Activated CD4-positive, alpha-beta T cell treated with anti-CD3 and anti-CD28 coated beads, Interleukin-2, amount 10 ng/mL, durations not matched to agents 24 days and 14 days (primary cell): ENCODE measurements at regions of chr7 and their contacts with region 1.

Region 1: GRCh38 chr7:129091484-129092002 is 36.6 kb upstream of the TNPO3 start:
- DNase-seq: peak; percentile 97
- H3K4me3 Mint-ChIP-seq: no peak overlapping the region
- H3K27ac Mint-ChIP-seq: no peak overlapping the region
- H3K4me1 Mint-ChIP-seq: peaks cover 25% of the 10 kb centered on the region
- H3K27me3 Mint-ChIP-seq: peaks cover 2% of the 10 kb centered on the region

Region 2: DNA sequence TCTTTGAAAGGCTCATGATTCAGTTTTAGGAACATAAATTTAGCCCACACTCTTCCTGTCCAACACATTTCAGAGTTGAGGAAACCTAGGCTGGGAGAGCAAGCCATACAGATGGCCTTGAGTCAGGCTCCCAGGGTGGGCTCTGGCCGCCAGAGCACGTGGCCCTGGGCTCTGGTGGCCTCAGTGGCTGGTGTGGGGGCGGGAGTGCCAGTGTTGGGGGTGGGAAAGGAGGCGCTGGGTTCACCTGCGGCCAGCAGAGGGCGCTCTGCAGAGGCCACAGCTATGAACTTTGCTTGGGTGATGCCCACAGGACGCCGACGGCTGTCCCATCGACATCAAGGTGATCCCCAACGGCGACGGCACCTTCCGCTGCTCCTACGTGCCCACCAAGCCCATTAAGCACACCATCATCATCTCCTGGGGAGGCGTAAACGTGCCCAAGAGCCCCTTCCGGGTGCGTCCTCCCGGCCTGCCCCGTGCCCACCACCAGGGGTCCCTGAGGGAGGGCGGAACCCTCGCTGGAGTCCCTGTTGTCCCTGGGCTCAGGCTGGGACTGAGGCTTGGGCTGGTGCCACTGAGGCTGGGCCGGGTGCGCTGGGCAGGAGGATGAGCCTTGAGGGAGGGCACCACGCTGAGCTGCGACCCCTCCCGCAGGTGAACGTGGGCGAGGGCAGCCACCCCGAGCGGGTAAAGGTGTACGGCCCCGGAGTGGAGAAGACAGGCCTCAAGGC is 249.5 kb before region 1 on chr7:
- intact Hi-C with region 1: loop called (anchors 5 kb)
- DNase-seq: peak; percentile 87
- H3K4me3 Mint-ChIP-seq: no peak overlapping the region
- H3K27ac Mint-ChIP-seq: no peak overlapping the region
- H3K4me1 Mint-ChIP-seq: no peaks in the 10 kb centered on the region
- H3K27me3 Mint-ChIP-seq: no peaks in the 10 kb centered on the region

Region 3: DNA sequence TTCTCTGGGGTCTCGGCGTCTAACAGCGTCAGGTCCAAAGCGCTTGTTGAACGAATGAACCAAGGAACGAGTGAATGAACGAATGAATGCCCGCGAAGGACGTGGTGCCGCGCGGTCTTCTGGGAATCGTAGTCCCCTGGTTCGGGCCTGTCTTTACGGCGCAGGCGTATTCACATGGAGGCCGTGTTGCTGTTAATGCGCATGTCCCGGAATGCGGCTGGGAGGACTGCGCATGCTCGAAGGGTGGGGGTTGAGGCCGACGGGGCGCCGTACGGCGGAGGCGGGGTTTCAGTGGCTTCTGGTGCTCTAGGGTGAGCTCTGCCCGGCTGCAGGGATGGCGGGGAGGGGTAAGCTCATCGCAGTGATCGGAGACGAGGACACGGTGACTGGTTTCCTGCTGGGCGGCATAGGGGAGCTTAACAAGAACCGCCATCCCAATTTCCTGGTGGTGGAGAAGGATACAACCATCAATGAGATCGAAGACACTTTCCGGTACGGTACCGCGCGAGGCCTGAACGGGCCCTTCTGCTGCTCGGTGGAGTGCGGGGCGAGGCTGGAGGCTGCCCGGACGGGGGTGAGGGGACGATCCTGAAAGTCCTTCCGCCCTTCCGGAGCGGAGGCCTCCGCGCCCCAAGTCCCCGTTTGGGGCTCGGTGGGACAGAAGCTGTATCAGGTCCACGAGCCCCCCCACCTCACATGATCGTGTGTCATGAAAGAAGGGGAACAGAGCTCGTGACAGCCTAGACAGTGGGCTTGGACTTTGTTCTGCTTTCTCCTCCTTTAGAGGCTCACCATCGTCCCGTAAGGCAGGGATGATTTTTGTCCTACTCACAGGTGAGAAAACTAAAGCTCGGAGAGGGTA is 228.7 kb before region 1 on chr7 and contains the start of gene ATP6V1F:
- intact Hi-C with region 1: loop called (anchors 1 kb)
- DNase-seq: peak; percentile 100
- H3K4me3 Mint-ChIP-seq: peak within 1 kb of the TSS; percentile 93
- H3K27ac Mint-ChIP-seq: peak within 1 kb of the TSS; percentile 96
- H3K4me1 Mint-ChIP-seq: peaks cover 24% of the 10 kb centered on the region
- H3K27me3 Mint-ChIP-seq: peaks cover 4% of the 10 kb centered on the region
- total RNA-seq, gene ATP6V1F: 127 and 132 TPM in 2 replicates

Region 4: DNA sequence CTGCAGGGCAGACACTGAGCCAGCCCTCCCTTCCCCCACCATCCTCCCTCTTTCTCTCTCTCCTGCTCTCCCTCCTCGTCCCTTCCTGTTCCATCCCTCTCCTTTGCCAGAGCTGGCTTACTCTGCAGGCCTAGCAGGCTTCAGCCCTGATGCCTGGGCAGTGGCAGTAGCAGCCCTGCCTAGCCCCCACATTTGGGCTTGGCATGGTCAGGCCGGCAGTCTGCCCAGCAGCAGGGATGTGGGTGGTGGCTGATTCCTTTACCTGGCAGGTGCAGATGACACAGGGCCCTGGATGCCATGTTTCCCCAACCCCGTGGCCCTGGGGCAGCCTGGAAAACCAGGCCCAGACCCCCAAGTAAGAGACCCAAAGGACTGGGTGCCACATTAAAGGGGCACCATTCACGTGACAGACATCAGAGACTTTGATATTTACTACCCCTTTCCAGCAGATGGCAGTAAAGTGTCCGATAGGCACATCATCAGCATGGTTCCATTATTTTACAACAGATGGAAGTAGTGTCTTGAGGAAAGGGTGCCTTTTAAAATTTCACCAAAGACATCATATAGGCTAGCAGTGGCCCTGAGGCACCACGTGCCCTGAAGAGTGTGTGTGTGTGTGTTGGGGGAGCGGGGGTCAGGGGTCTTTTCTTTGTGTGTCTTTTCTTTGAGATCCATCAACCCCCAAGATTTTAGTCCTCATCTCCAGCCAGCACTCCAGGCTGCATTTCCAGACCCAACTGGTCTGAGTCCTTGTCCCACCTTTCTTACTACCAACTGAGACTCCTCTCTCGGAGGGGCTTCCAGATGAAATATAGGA is 187.0 kb before region 1 on chr7:
- intact Hi-C with region 1: loop called (anchors 1 kb)
- DNase-seq: peak; percentile 80
- H3K4me3 Mint-ChIP-seq: no peak overlapping the region
- H3K27ac Mint-ChIP-seq: no peak overlapping the region
- H3K4me1 Mint-ChIP-seq: no peaks in the 10 kb centered on the region
- H3K27me3 Mint-ChIP-seq: peaks cover 18% of the 10 kb centered on the region

Region 5: DNA sequence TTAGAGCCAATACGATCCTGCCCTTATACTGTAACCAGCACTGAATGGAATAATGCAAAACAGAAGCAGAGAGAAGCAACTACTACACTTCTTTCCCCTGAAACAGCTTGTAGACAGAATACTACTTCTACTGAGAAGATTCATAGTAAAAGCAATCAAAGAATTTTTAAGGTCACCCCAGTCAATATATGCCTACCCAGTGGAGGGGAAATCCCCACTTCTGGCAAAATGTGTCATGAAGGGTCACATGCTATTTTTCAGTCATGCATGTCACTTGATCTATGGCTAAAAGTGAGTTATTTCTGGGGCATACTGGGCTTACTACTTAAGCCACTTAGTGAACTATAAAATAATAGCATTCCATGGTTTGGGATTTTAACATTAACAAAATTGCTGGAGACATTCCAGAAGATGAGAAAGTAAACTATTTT is 128.2 kb before region 1 on chr7:
- intact Hi-C with region 1: loop called (anchors 1 kb)
- DNase-seq: peak; percentile 76
- H3K4me3 Mint-ChIP-seq: peak overlapping the region; percentile 50
- H3K27ac Mint-ChIP-seq: peak overlapping the region; percentile 87
- H3K4me1 Mint-ChIP-seq: peaks cover 30% of the 10 kb centered on the region
- H3K27me3 Mint-ChIP-seq: no peaks in the 10 kb centered on the region